Caco-2 (cell line): ENCODE measurements at regions of chr1 and their contacts with region 1.

Region 1: DNA sequence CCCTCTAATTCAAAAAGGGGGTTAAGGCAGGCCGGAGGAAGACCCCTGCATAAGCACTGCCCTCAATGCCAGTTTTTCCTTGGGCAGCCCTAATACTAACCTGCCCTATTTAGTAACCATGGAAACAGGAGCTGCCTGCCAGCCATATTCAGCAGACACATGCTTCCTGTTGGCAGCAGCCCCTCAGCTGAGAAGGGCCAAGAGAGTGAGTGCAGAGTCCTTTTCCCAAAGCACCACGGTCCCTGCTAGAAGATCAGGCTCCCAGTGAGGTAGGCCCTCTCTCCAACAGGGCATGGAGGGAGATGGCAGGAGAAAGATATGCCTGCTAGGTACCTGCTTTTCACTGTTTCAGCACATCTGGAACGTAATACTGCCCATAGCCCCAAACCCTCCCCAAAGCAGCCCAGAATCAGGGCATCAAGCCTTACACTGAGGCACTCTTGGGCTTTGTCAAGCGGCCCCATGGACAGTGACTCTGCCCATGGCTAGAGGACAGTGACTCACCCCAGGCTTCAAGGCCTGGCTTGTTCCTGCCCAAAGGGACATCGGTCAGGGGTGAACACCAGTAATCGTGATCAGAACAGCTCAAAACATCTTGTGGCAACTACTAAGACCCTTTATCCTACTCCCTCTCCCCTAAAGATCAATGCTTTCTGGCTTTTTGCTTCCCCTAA is 64.5 kb downstream of the BCAR3 start:
- DNase-seq: no peak
- H3K4me3 ChIP-seq: no peak overlapping the region
- H3K4me3 Mint-ChIP-seq: peak overlapping the region; percentile 35
- H3K27ac Mint-ChIP-seq: peak overlapping the region; percentile 92
- H3K4me1 ChIP-seq: peaks cover 56% of the 10 kb centered on the region
- H3K4me1 Mint-ChIP-seq: peaks cover 47% of the 10 kb centered on the region
- H3K27me3 ChIP-seq: no peaks in the 10 kb centered on the region
- H3K27me3 Mint-ChIP-seq: no peaks in the 10 kb centered on the region
- CTCF ChIP-seq: no peak

Region 2: GRCh38 chr1:93374334-93375106 is 242.6 kb before region 1 on chr1:
- CTCF ChIA-PET with region 1: no interaction called
- POLR2A ChIA-PET with region 1: no interaction called
- intact Hi-C with region 1: no loop called
- DNase-seq: no peak
- H3K4me3 ChIP-seq: no peak overlapping the region
- H3K4me3 Mint-ChIP-seq: no peak overlapping the region
- H3K27ac Mint-ChIP-seq: no peak overlapping the region
- H3K4me1 ChIP-seq: no peaks in the 10 kb centered on the region
- H3K4me1 Mint-ChIP-seq: no peaks in the 10 kb centered on the region
- H3K27me3 ChIP-seq: no peaks in the 10 kb centered on the region
- H3K27me3 Mint-ChIP-seq: no peaks in the 10 kb centered on the region
- CTCF ChIP-seq: no peak

Region 3: GRCh38 chr1:93437976-93438605 is 179.0 kb before region 1 on chr1:
- CTCF ChIA-PET with region 1: interaction called, 5 read pairs
- POLR2A ChIA-PET with region 1: no interaction called
- intact Hi-C with region 1: loop called (anchors 2 kb)
- DNase-seq: peak in 1 of 2 experiments; percentile 14
- H3K4me3 ChIP-seq: no peak overlapping the region
- H3K4me3 Mint-ChIP-seq: no peak overlapping the region
- H3K27ac Mint-ChIP-seq: no peak overlapping the region
- H3K4me1 ChIP-seq: peaks cover 5% of the 10 kb centered on the region; the same call in 1 of the 2 replicates
- H3K4me1 Mint-ChIP-seq: no peaks in the 10 kb centered on the region
- H3K27me3 ChIP-seq: no peaks in the 10 kb centered on the region
- H3K27me3 Mint-ChIP-seq: no peaks in the 10 kb centered on the region
- CTCF ChIP-seq: peak; percentile 24

Region 4: GRCh38 chr1:93579891-93580290 is 37.2 kb before region 1 on chr1:
- CTCF ChIA-PET with region 1: no interaction called
- POLR2A ChIA-PET with region 1: interaction called, 3 read pairs
- intact Hi-C with region 1: loop called (anchors 1 kb)
- DNase-seq: peak; percentile 64 to 78
- H3K4me3 ChIP-seq: no peak overlapping the region
- H3K4me3 Mint-ChIP-seq: no peak overlapping the region
- H3K27ac Mint-ChIP-seq: no peak overlapping the region
- H3K4me1 ChIP-seq: peaks cover 51% of the 10 kb centered on the region
- H3K4me1 Mint-ChIP-seq: peaks cover 6% of the 10 kb centered on the region
- H3K27me3 ChIP-seq: no peaks in the 10 kb centered on the region
- H3K27me3 Mint-ChIP-seq: no peaks in the 10 kb centered on the region
- CTCF ChIP-seq: no peak

Region 5: GRCh38 chr1:93635614-93636543 is 18.7 kb after region 1 on chr1:
- CTCF ChIA-PET with region 1: no interaction called
- POLR2A ChIA-PET with region 1: no interaction called
- intact Hi-C with region 1: no loop called
- DNase-seq: no peak
- H3K4me3 ChIP-seq: no peak overlapping the region
- H3K4me3 Mint-ChIP-seq: no peak overlapping the region
- H3K27ac Mint-ChIP-seq: no peak overlapping the region
- H3K4me1 ChIP-seq: peaks cover 17% of the 10 kb centered on the region
- H3K4me1 Mint-ChIP-seq: peaks cover 6% of the 10 kb centered on the region
- H3K27me3 ChIP-seq: no peaks in the 10 kb centered on the region
- H3K27me3 Mint-ChIP-seq: no peaks in the 10 kb centered on the region
- CTCF ChIP-seq: no peak